CD4-positive, alpha-beta T cell (primary cell): ENCODE measurements at regions of chr7 and their contacts with region 1.

Region 1: DNA sequence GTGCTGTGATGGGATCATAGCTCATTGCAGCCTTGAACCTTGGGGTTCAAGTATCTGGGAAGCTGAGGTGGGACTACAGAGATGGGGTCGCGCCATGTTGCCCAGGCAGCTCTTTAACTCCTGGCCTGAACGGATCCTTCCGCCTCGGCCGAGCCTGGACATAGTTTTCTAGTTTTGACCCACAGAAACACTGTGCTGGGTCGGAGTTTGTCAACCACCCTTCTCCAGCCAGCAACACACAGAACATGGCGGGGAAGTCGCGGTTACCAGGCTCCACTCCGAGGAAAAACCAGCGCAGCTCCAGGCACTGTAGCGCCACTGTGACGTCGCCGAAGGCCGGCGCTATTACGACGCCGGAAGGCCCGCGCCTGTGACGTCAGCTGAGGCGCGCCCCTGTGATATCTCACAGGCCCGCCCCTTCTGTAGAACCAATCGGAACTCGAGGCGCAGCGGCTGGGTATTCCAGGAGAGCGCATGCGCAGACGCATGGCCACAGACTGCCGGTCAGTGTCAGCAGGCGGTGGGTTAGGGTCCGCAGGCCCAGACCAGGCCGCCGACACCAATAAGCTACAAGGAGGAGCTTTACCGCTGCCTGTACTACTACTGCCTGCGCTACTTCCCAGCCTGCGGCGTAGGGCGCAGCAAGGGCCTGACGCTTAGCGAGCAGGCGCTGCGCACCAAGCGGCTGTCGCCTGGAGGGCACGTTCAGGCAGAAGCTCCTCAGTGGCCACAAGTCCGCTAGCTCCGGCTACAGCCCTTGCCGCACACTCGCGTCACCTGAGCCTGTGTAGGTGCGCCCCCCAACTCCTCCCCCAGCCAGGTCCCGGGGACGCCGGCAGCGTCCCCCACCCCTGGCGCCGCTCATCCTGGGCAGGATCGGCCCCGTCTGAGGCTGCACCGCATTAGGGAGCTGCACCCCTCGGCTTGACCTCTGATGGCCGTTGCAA is 135.2 kb upstream of the KCTD7 start:
- DNase-seq: peak; percentile 91 to 99 (median 95)
- ATAC-seq: peak; percentile 92
- H3K4me3 ChIP-seq: peak overlapping the region; percentile 87
- H3K4me3 Mint-ChIP-seq: peak overlapping the region; percentile 97
- H3K27ac ChIP-seq: peak overlapping the region; percentile 86 to 95
- H3K27ac Mint-ChIP-seq: peak overlapping the region; percentile 100
- H3K4me1 ChIP-seq: peaks cover 20% of the 10 kb centered on the region
- H3K4me1 Mint-ChIP-seq: peaks cover 22% of the 10 kb centered on the region
- H3K27me3 ChIP-seq: no peaks in the 10 kb centered on the region
- H3K27me3 Mint-ChIP-seq: no peaks in the 10 kb centered on the region
- CTCF ChIP-seq: no peak

Region 2: GRCh38 chr7:65872776-65873581 is 620.5 kb before region 1 on chr7 and contains the start of gene VKORC1L1:
- CTCF ChIA-PET with region 1: no interaction called
- POLR2A ChIA-PET with region 1: interaction called, 3 read pairs
- intact Hi-C with region 1: loop called in 1 of 2 experiments (anchors 5 kb)
- DNase-seq: peak; percentile 89 to 97 (median 96)
- ATAC-seq: peak; percentile 87
- H3K4me3 ChIP-seq: peak within 1 kb of the TSS; percentile 68
- H3K4me3 Mint-ChIP-seq: peak within 1 kb of the TSS; percentile 91
- H3K27ac ChIP-seq: no peak within 1 kb of the TSS
- H3K27ac Mint-ChIP-seq: peak within 1 kb of the TSS; percentile 80
- H3K4me1 ChIP-seq: peaks cover 13% of the 10 kb centered on the region
- H3K4me1 Mint-ChIP-seq: peaks cover 12% of the 10 kb centered on the region
- H3K27me3 ChIP-seq: no peaks in the 10 kb centered on the region
- H3K27me3 Mint-ChIP-seq: no peaks in the 10 kb centered on the region
- CTCF ChIP-seq: no peak
- total RNA-seq, gene VKORC1L1: 1.9 to 3.0 TPM

Region 3: GRCh38 chr7:66413379-66414114 is 80.0 kb before region 1 on chr7:
- CTCF ChIA-PET with region 1: interaction called, 4 read pairs
- POLR2A ChIA-PET with region 1: interaction called, 10 read pairs
- intact Hi-C with region 1: loop called (anchors 5 kb)
- DNase-seq: peak; percentile 65 to 94 (median 80)
- ATAC-seq: peak; percentile 88
- H3K4me3 ChIP-seq: peak overlapping the region; percentile 63
- H3K4me3 Mint-ChIP-seq: peak overlapping the region; percentile 86
- H3K27ac ChIP-seq: no peak overlapping the region
- H3K27ac Mint-ChIP-seq: peak overlapping the region; percentile 86
- H3K4me1 ChIP-seq: peaks cover 18% of the 10 kb centered on the region
- H3K4me1 Mint-ChIP-seq: peaks cover 11% of the 10 kb centered on the region
- H3K27me3 ChIP-seq: no peaks in the 10 kb centered on the region
- H3K27me3 Mint-ChIP-seq: no peaks in the 10 kb centered on the region
- CTCF ChIP-seq: peak; percentile 23

Region 4: DNA sequence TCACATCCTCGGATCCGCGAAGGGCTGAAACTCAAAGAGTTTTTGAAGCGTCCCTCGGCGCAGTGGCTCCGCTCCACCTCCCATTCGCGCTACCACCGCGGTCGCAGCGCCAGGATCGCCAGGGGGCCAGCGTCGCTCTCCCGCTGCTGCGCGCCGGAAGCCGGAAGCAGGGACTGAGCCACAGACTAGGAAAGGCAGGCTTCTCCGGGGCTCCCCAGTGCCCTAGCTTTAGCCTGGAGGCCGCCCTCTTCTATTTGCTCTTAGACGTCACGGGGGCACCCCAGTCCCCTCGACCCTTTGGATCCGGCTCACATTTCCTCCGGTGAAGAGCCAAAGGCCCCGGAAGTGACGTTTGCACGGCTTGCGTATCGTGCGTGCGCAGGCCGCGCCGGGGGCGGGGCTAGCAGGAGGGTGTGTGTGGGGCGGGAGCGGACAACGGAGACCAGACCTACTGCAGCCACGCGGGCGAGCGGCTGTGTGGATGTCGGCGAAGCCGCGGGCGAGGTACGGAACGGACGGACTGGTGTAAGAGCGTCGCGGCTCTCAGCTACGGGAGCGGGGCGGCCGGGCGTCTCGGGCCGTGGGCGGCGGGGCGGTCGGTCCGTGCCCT is 160.7 kb after region 1 on chr7:
- CTCF ChIA-PET with region 1: interaction called, 4 read pairs
- POLR2A ChIA-PET with region 1: interaction called, 20 read pairs
- intact Hi-C with region 1: loop called (anchors 1 kb)
- DNase-seq: peak; percentile 94 to 99 (median 96)
- ATAC-seq: peak; percentile 90
- H3K4me3 ChIP-seq: peak overlapping the region; percentile 97
- H3K4me3 Mint-ChIP-seq: peak overlapping the region; percentile 99
- H3K27ac ChIP-seq: peak overlapping the region; percentile 91 to 92
- H3K27ac Mint-ChIP-seq: peak overlapping the region; percentile 97
- H3K4me1 ChIP-seq: peaks cover 26% of the 10 kb centered on the region
- H3K4me1 Mint-ChIP-seq: peaks cover 47% of the 10 kb centered on the region
- H3K27me3 ChIP-seq: no peaks in the 10 kb centered on the region
- H3K27me3 Mint-ChIP-seq: no peaks in the 10 kb centered on the region
- CTCF ChIP-seq: peak; percentile 35

Region 5: DNA sequence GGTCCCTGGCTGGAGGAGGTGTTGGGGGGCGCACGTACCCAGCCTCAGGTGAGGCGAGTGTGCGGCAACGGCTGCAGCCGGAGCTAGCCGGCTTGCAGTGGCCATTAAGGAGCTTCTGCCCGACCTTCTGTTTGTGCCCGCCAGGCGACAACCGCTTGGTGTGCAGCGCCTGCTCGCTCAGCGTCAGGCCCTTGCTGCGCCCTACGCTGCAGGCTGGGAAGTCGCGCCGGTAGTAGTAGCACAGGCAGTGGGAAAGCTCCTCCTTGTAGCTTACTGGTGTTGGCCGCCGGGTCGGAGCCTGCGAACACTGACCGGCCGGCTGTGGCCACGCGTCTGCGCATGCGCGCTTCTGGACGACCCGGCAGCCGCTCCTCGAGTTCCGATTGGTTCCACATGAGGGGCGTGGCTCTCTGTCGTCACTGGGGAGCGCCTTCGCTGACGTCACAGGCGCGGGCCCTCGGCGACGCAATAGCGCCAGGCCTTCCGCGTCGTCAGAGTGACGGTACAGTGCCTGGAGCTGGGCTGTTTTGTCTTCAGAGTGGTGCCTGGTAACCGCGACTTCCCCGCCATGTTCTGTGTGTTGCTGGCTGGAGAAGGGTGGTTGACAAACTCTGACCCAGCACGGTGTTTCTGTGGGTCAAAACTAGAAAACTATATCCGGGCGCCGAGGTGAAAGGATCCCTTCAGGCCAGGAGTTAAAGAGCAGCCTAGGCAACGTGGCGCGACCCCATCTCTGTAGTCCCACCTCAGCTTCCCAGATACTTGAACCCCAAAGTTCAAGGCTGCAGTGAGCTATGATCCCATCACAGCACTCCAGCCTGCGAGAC is 351.3 kb after region 1 on chr7:
- CTCF ChIA-PET with region 1: interaction called, 5 read pairs
- POLR2A ChIA-PET with region 1: interaction called, 49 read pairs
- intact Hi-C with region 1: loop called in 1 of 2 experiments (anchors 2 kb)
- DNase-seq: peak; percentile 98 to 100 (median 99)
- ATAC-seq: peak; percentile 89
- H3K4me3 ChIP-seq: peak overlapping the region; percentile 99
- H3K4me3 Mint-ChIP-seq: peak overlapping the region; percentile 96
- H3K27ac ChIP-seq: peak overlapping the region; percentile 98 to 100
- H3K27ac Mint-ChIP-seq: peak overlapping the region; percentile 97
- H3K4me1 ChIP-seq: peaks cover 21% of the 10 kb centered on the region
- H3K4me1 Mint-ChIP-seq: peaks cover 24% of the 10 kb centered on the region
- H3K27me3 ChIP-seq: no peaks in the 10 kb centered on the region
- H3K27me3 Mint-ChIP-seq: peaks cover 3% of the 10 kb centered on the region
- CTCF ChIP-seq: peak; percentile 37